Activated T-helper 2 cell treated with anti-CD3 and anti-CD28 coated beads, Interferon-gamma antibody, Interleukin-2, Interleukin-4, amounts not matched to agents 10 μg/mL and 5 μg/mL and 100 μg/mL, durations not matched to agents 14 hours and 24 hours and 36 hours (primary cell): ENCODE measurements at regions of chr1 and their contacts with region 1.

Region 1: DNA sequence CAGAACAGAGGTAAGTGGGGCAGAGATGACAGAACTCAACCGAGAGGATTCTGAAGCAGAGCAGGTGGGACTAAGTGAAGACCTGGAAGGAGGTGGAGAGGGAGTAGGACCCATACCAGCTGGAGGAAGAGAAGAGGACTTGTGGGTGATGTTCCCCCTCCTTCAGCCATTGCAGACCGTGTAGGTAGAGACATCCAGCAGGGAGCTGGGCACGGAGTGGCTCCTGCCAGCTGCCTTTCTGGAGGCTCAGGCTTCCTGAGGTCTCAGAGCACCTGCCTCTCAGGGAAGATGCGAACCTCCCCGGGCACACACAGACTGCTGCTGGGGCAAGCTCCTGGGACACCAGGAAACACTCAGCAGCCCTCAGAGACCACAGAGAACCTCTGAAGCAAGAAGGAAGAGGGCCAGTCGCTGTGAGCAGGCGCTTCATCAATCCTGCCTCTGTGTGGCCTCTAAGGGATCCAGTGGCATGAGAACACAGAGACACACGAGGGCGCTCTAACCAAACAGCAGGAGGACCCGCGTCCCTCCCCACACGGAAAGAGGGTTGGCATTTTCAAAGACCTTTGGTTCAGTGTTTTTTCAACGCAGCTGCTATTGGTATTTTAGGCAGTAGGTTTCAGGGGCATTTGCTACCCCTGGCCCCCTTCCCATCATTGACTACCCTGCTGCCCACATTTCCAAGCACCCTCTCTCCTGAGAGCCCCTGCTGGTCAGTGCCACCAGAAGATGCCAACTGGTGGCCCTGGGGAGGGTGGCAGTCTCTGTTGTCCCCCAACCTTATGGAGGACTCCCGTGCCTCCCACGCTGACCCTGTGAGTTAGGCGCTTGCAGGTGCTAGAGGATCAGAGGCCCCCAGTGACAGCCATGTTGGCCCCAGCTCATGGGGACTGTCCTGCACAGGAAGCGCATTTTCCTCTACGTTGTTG is 89.6 kb upstream of the EDN2 start:
- DNase-seq: peak; percentile 76
- H3K4me3 Mint-ChIP-seq: no peak overlapping the region
- H3K27ac Mint-ChIP-seq: peak overlapping the region; percentile 64
- H3K4me1 Mint-ChIP-seq: peaks cover 44% of the 10 kb centered on the region
- H3K27me3 Mint-ChIP-seq: no peaks in the 10 kb centered on the region

Region 2: DNA sequence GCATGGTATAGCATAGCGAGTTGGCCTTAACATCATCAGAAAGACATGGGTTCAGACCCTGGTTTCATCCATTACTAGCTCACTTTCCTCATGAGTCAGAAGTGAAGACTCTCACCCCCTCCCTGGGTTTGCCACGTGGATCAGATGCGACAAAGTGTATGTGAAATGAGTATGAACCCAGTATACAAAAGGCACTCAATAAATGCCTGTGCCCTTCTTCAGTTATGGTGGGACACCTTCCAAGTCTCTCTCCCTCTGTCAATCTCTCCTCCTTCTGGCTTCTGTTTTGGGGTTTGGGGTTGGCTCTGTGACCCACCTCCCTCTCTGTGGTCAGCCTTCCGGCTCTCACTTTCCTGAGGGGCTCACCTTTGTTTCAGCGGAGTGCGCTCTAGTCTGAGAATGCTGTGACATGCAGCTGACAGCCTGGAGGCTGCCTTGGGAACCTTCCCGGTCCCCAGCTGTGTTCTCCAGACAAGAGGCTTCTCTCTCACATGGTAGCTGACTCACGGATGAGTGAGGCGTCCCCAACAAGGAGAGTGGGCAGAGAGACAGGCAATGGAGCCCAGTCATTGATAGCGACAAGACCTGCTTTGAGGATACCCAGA is 65.4 kb after region 1 on chr1:
- intact Hi-C with region 1: loop called (anchors 2 kb)
- DNase-seq: no peak
- H3K4me3 Mint-ChIP-seq: peak overlapping the region; percentile 60
- H3K27ac Mint-ChIP-seq: no peak overlapping the region
- H3K4me1 Mint-ChIP-seq: peaks cover 46% of the 10 kb centered on the region
- H3K27me3 Mint-ChIP-seq: no peaks in the 10 kb centered on the region

Region 3: GRCh38 chr1:41662061-41662764 is 88.2 kb after region 1 on chr1:
- intact Hi-C with region 1: loop called (anchors 5 kb)
- DNase-seq: peak; percentile 75
- H3K4me3 Mint-ChIP-seq: peak overlapping the region; percentile 60
- H3K27ac Mint-ChIP-seq: peak overlapping the region; percentile 28
- H3K4me1 Mint-ChIP-seq: peaks cover 75% of the 10 kb centered on the region
- H3K27me3 Mint-ChIP-seq: no peaks in the 10 kb centered on the region

Region 4: GRCh38 chr1:41728403-41729202 is 154.6 kb after region 1 on chr1:
- intact Hi-C with region 1: loop called (anchors 5 kb)
- DNase-seq: peak; percentile 20
- H3K4me3 Mint-ChIP-seq: no peak overlapping the region
- H3K27ac Mint-ChIP-seq: peak overlapping the region; percentile 67
- H3K4me1 Mint-ChIP-seq: peaks cover 43% of the 10 kb centered on the region
- H3K27me3 Mint-ChIP-seq: no peaks in the 10 kb centered on the region

Region 5: GRCh38 chr1:41812051-41812450 is 238.0 kb after region 1 on chr1:
- intact Hi-C with region 1: loop called (anchors 1 kb)
- DNase-seq: peak; percentile 49
- H3K4me3 Mint-ChIP-seq: no peak overlapping the region
- H3K27ac Mint-ChIP-seq: no peak overlapping the region
- H3K4me1 Mint-ChIP-seq: peaks cover 49% of the 10 kb centered on the region
- H3K27me3 Mint-ChIP-seq: no peaks in the 10 kb centered on the region

Region 6: DNA sequence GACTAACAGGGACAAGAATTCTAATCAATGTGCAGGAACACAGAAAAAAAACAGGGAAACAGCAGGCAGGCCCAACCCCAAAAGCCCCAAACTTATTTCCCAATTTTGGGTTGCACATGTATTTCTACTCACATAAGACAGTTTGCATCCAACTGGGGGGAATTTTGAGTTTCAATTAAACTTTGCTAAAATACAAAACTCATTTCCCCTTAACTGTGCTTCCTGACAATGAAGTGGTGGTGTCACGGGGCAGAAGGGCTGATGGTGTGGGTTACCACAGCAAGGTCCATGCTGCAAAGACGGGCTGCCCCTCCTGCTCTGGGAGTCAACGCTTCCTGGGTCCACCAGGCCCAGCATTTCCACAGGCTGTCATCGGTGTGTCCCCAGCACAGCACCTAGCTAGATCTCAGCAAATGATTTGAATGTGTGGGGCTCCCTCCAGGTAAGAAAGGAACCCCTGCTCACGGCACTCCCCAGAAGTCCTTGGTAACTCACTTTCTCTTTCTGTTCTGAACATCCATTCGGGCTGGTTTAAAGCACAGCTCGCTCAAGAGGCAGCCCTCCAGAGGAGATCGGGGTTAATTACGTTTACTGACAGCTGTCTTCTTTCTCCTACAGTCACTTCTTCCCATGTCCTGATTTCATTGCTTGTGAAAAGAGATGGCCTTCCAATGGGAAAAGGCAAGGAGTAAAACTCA is 317.3 kb after region 1 on chr1:
- intact Hi-C with region 1: loop called (anchors 10 kb)
- DNase-seq: peak; percentile 61
- H3K4me3 Mint-ChIP-seq: peak overlapping the region; percentile 83
- H3K27ac Mint-ChIP-seq: peak overlapping the region; percentile 96
- H3K4me1 Mint-ChIP-seq: peaks cover 36% of the 10 kb centered on the region
- H3K27me3 Mint-ChIP-seq: no peaks in the 10 kb centered on the region

Region 7: GRCh38 chr1:42035830-42036604 is 462.0 kb after region 1 on chr1:
- intact Hi-C with region 1: loop called (anchors 10 kb)
- DNase-seq: peak; percentile 94
- H3K4me3 Mint-ChIP-seq: peak overlapping the region; percentile 78
- H3K27ac Mint-ChIP-seq: no peak overlapping the region
- H3K4me1 Mint-ChIP-seq: peaks cover 17% of the 10 kb centered on the region
- H3K27me3 Mint-ChIP-seq: peaks cover 14% of the 10 kb centered on the region